Mammary epithelial cell (primary cell): ENCODE measurements at regions of chr11 and their contacts with region 1.

Region 1: DNA sequence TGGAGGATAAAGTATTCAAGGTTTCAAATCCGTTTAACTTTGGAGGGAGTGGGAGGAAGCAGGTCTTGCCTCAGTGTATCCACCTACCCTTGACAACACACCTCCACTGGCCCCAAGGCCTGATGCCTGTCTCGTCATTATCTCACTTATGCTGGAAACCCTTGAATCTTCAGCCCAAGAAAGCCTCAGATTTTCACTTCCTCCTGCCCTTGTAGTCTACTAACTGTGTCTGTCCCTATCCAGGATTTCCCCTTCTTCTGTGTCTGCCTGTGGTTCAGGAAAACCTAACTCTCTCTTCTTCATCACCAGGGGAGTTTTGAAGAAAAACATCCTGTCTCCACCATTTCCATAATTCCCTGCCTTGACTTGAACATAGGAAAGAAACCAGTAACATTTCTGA is 56.1 kb downstream of the SYT9 start:
- DNase-seq: no peak
- H3K4me3 ChIP-seq: no peak overlapping the region
- H3K27ac ChIP-seq: no peak overlapping the region
- H3K4me1 ChIP-seq: no peaks in the 10 kb centered on the region
- H3K27me3 ChIP-seq: no peaks in the 10 kb centered on the region
- CTCF ChIP-seq: no peak

Region 2: DNA sequence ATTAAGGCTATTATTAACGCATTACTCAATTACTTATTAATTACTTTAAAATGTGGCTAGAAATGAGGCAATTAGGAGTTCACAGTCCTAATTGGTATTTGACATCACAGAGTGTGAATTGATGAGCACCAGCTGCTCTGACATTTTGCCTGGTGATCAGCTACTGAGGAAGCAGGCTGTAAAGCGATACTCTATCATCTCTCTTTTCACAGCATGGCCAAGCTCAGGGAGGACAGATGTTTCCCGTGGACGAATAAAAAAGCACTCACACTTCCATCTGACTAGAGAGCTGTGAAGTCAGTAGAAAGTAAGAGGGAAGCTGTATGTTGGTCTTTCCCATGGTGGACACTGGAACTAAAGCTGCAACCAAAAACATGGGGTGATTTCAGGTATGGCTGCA is 85.2 kb before region 1 on chr11:
- CTCF ChIA-PET with region 1: no interaction called
- dilution Hi-C with region 1: loop called (anchors 5 kb)
- in situ Hi-C with region 1: no loop called
- intact Hi-C with region 1: no loop called
- DNase-seq: no peak
- H3K4me3 ChIP-seq: no peak overlapping the region
- H3K27ac ChIP-seq: no peak overlapping the region
- H3K4me1 ChIP-seq: no peaks in the 10 kb centered on the region
- H3K27me3 ChIP-seq: peaks cover 3% of the 10 kb centered on the region
- CTCF ChIP-seq: no peak

Region 3: GRCh38 chr11:7353100-7353499 is 45.3 kb after region 1 on chr11:
- CTCF ChIA-PET with region 1: no interaction called
- dilution Hi-C with region 1: loop called (anchors 5 kb)
- in situ Hi-C with region 1: no loop called
- intact Hi-C with region 1: no loop called
- DNase-seq: peak; percentile 24
- H3K4me3 ChIP-seq: no peak overlapping the region
- H3K27ac ChIP-seq: no peak overlapping the region
- H3K4me1 ChIP-seq: no peaks in the 10 kb centered on the region
- H3K27me3 ChIP-seq: peaks cover 3% of the 10 kb centered on the region
- CTCF ChIP-seq: peak; percentile 67 to 75